Activated T-helper 2 cell treated with anti-CD3 and anti-CD28 coated beads, Interferon-gamma antibody, Interleukin-2, Interleukin-4, amounts not matched to agents 10 μg/mL and 5 μg/mL and 100 μg/mL, durations not matched to agents 14 hours and 24 hours and 36 hours (primary cell): ENCODE measurements at regions of chr6 and their contacts with region 1.

Region 1: DNA sequence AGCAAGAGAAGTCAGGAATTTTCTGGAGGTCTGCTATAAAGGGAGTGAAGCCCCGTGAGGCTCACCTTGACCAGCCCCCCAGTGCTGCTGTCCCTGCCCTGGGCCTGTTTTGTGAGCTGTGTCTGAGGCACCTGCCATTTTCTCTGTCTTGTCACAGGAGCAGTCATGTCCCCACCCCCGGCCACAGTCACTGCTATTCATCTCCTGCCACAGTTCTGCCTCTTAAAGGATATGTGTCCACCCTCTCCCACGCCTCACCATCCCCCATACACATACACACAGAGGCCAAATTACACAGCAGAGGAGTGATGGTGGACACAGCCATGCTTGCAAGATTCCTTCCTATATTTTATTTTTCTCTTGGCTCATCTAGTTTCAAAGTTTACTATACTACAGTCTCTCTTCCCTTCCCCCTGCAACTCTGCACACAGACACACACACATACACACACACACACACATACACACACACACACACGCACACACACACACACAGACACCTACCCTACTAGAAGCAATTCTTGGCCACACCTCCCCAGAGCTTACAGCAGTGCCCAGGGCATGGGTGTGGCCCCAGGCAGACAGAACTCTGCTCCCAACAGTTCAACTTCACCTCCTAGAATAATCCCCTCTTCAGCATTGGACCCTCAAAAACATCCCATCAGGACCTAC is 68.7 kb upstream of the TAB2 start:
- DNase-seq: peak; percentile 28
- H3K4me3 Mint-ChIP-seq: no peak overlapping the region
- H3K27ac Mint-ChIP-seq: peak overlapping the region; percentile 28
- H3K4me1 Mint-ChIP-seq: peaks cover 36% of the 10 kb centered on the region
- H3K27me3 Mint-ChIP-seq: no peaks in the 10 kb centered on the region

Region 2: DNA sequence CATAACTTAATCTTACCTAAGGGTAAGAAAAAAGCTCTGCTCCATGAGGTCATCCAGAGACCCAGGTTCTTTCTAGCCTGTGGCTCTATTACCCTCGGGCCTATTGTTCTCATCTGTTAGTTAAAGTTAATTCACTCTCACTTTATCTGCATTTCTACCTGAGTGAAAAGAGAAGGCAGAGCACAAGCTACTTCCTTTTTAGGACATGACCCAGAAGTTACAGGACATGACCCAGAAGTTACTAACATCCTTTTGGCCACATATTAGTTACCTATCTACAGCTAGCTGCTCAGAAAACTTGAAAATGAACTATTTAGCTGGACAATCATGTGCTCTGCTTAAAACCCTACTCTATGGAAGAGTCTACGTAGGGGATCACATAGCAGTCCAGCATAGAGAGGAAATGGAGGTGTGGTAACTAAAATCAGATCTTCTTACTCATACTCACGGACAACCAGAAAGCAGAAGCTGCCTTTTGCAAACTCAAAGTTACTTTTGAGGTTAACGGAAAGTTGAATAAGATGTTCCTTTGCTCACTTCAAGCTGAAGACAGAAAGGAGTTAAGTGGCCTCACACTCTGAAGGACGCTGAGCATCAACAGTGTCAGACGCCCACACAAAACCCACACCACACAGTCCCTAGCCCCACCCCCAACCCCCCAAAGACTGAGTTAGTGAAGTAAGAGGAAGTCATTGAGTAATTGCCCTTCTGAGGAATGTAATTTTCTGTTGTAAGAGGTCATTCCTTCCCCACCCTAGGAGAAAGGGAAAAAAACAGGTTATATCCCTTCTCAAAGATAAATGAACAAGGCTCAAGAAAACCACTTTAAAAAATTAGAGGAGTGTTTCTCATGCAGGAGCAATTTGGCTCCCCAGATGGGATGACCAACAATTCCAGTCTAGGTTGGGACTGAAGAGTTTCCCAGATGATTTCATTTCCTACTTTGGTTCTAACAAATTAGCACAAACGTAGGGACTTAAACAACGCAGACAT is 22.8 kb after region 1 on chr6:
- intact Hi-C with region 1: loop called (anchors 2 kb)
- DNase-seq: no peak
- H3K4me3 Mint-ChIP-seq: peak overlapping the region; percentile 58
- H3K27ac Mint-ChIP-seq: peak overlapping the region; percentile 83
- H3K4me1 Mint-ChIP-seq: peaks cover 39% of the 10 kb centered on the region
- H3K27me3 Mint-ChIP-seq: no peaks in the 10 kb centered on the region

Region 3: GRCh38 chr6:149306967-149307366 is 58.1 kb after region 1 on chr6:
- intact Hi-C with region 1: no loop called
- DNase-seq: no peak
- H3K4me3 Mint-ChIP-seq: no peak overlapping the region
- H3K27ac Mint-ChIP-seq: no peak overlapping the region
- H3K4me1 Mint-ChIP-seq: peaks cover 4% of the 10 kb centered on the region
- H3K27me3 Mint-ChIP-seq: no peaks in the 10 kb centered on the region

Region 4: GRCh38 chr6:149393002-149393679 is 144.3 kb after region 1 on chr6:
- intact Hi-C with region 1: no loop called
- DNase-seq: no peak
- H3K4me3 Mint-ChIP-seq: peak overlapping the region; percentile 27
- H3K27ac Mint-ChIP-seq: peak overlapping the region; percentile 87
- H3K4me1 Mint-ChIP-seq: peaks cover 72% of the 10 kb centered on the region
- H3K27me3 Mint-ChIP-seq: no peaks in the 10 kb centered on the region